CD14-positive monocyte (primary cell): ENCODE measurements at regions of chr19 and their contacts with region 1.

Region 1: GRCh38 chr19:6767357-6768235 is at the start of gene SH2D3A:
- DNase-seq: peak; percentile 77 to 97 (median 78)
- H3K4me3 ChIP-seq: peak within 1 kb of the TSS; percentile 16 to 74 (median 37)
- H3K4me3 Mint-ChIP-seq: peak within 1 kb of the TSS; percentile 82 to 90
- H3K27ac ChIP-seq: peak within 1 kb of the TSS; percentile 30 to 70
- H3K27ac Mint-ChIP-seq: peak within 1 kb of the TSS; percentile 86 to 94 (median 91)
- H3K4me1 ChIP-seq: peaks cover 28 to 45% of the 10 kb centered on the region in 2 donors
- H3K4me1 Mint-ChIP-seq: peaks cover 44% of the 10 kb centered on the region
- H3K27me3 ChIP-seq: peaks cover 0 to 13% of the 10 kb centered on the region in 2 donors
- H3K27me3 Mint-ChIP-seq: peaks cover 12 to 17% (median 15%) of the 10 kb centered on the region in 3 donors
- CTCF ChIP-seq: no peak
- polyA plus RNA-seq, gene SH2D3A: 0.11 TPM in 1 of 3 donors, not detected in the others

Region 2: GRCh38 chr19:6516659-6517291 is 250.8 kb before region 1 on chr19:
- intact Hi-C with region 1: loop called (anchors 10 kb)
- DNase-seq: peak; percentile 78 to 86 (median 84)
- H3K4me3 ChIP-seq: peak overlapping the region; percentile 65 to 82 (median 74)
- H3K4me3 Mint-ChIP-seq: peak overlapping the region; percentile 98 to 100
- H3K27ac ChIP-seq: peak overlapping the region; percentile 38 to 52
- H3K27ac Mint-ChIP-seq: peak overlapping the region; percentile 83 to 97 (median 89)
- H3K4me1 ChIP-seq: peaks cover 18 to 31% of the 10 kb centered on the region in 2 donors
- H3K4me1 Mint-ChIP-seq: peaks cover 25% of the 10 kb centered on the region
- H3K27me3 ChIP-seq: no peaks in the 10 kb centered on the region
- H3K27me3 Mint-ChIP-seq: peaks cover 5 to 28% (median 20%) of the 10 kb centered on the region in 3 donors
- CTCF ChIP-seq: peak; percentile 94

Region 3: DNA sequence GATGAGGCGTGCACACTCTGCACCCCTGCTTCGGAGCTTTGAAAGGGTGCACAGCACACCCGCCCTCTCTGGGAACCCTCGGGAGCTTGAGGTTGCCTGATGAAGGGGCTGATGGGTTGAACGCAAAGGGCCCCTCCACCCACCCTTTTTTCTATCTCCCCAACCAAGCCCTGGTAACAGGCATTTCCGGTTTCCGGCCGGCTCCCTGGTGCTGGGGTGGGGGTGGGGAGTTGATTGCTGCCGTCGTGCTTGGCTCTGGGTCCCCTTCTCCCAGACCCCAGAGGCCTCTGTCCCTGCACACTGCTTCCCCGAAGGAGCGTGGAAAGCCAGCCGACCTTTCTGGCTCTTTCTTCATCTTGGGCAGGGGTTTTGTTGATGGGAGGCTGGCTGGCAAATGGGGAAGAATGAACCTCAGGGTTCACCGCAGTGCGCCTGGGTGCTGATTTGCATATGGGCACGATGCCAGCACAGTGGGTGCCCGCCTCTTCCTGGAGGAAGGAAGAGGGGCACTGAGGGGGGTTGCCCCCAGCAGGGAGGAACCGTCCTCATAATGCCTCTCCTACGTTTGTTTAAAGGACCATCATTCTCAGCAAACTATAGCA is 34.0 kb after region 1 on chr19:
- intact Hi-C with region 1: loop called (anchors 2 to 5 kb)
- DNase-seq: peak; percentile 90 to 93 (median 91)
- H3K4me3 ChIP-seq: peak overlapping the region; percentile 26 to 73 (median 36)
- H3K4me3 Mint-ChIP-seq: peak overlapping the region; percentile 76 to 92
- H3K27ac ChIP-seq: peak overlapping the region; percentile 85 to 89
- H3K27ac Mint-ChIP-seq: peak overlapping the region; percentile 98 to 100 (median 99)
- H3K4me1 ChIP-seq: peaks cover 65 to 73% of the 10 kb centered on the region in 2 donors
- H3K4me1 Mint-ChIP-seq: peaks cover 73% of the 10 kb centered on the region
- H3K27me3 ChIP-seq: no peaks in the 10 kb centered on the region
- H3K27me3 Mint-ChIP-seq: no peaks in the 10 kb centered on the region
- CTCF ChIP-seq: no peak